ENCODE measurements at regions of chr7 and their contacts with region 1.

Region 1: DNA sequence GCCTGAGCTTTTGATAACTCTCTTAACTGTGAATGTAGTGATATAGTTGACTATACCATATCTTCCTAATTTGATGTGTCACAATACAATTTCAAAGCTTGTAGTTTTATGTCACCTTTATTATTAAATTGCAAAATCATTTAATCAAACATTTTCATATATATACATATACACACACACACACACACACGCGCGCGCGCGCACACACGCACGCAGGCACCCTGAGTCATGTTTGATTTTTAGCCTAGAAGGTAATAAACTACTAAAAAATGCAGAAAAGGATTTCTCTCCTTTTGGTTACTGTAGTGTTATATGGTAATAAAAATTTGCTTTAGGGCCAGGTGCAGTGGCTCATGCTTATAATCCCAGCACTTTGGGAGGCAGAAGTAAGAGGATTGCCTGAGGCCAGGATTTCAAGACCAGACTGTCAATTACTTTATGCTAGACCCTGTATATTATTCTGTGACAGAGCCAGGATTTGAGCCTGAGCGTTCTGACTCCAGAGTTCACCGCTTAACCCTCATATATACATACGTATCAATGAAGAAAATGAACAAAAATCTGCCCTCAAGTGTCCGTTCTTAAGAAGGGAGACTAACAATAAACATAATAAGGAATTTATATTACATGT is 89.6 kb downstream of the PODXL start:
- DNase-seq: no peak
- ATAC-seq: no peak
- H3K4me3 ChIP-seq: no peak overlapping the region
- H3K27ac ChIP-seq: no peak overlapping the region
- H3K4me1 ChIP-seq: no peaks in the 10 kb centered on the region
- H3K27me3 ChIP-seq: no peaks in the 10 kb centered on the region
- CTCF ChIP-seq: no peak

Region 2: DNA sequence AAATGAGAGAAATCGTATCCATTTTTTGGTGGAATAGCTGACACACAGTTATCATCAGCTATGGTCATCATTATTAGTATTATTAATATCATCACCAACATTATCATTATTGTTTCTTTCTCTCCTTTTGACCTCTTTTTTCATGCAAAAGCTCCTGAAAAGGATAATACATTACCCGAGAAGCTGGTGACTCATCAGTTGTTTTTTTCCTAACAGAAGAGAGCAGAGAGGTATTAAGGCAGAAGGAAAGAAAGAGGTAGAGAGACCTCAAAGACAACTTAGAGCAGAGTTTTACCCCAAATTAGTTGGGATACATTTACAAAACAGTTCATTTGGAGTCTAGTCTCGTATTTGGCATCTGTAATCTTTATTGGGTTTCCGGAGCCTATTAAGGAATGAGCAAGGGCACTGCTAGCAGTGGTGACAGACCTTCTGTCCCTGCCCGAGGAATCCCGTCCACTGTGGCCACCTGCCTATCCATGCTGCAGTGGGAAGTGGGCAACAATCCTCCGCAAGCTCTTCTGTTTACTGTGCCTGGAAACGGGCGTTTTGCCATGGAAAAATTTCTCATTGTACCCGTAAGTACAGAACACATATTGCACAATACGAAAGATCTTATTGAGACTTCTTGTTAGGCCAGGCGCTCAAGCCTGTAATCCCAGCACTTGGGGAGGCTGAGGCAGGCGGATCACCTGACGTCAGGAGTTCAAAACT is 309.2 kb before region 1 on chr7:
- CTCF ChIA-PET with region 1: no interaction called
- POLR2A ChIA-PET with region 1: no interaction called
- in situ Hi-C with region 1: no loop called
- intact Hi-C with region 1: no loop called
- DNase-seq: no peak
- ATAC-seq: 0 out of 2 replicates have a peak, but pooled peaks have one; percentile 18
- H3K4me3 ChIP-seq: no peak overlapping the region
- H3K27ac ChIP-seq: peak overlapping the region; percentile 3; the same call in 1 of the 2 replicates
- H3K4me1 ChIP-seq: peaks cover 11% of the 10 kb centered on the region
- H3K27me3 ChIP-seq: no peaks in the 10 kb centered on the region
- CTCF ChIP-seq: no peak

Region 3: GRCh38 chr7:133203490-133203889 is 1736.6 kb after region 1 on chr7:
- CTCF ChIA-PET with region 1: no interaction called
- POLR2A ChIA-PET with region 1: interaction called, 13 read pairs
- in situ Hi-C with region 1: no loop called
- intact Hi-C with region 1: no loop called
- DNase-seq: no peak
- ATAC-seq: no peak
- H3K4me3 ChIP-seq: no peak overlapping the region
- H3K27ac ChIP-seq: no peak overlapping the region
- H3K4me1 ChIP-seq: no peaks in the 10 kb centered on the region
- H3K27me3 ChIP-seq: no peaks in the 10 kb centered on the region
- CTCF ChIP-seq: no peak

Measured in Panc1 (cell line).